Testis (tissue), 5 donors: ENCODE measurements at regions of chr2 and their contacts with region 1.

Region 1: DNA sequence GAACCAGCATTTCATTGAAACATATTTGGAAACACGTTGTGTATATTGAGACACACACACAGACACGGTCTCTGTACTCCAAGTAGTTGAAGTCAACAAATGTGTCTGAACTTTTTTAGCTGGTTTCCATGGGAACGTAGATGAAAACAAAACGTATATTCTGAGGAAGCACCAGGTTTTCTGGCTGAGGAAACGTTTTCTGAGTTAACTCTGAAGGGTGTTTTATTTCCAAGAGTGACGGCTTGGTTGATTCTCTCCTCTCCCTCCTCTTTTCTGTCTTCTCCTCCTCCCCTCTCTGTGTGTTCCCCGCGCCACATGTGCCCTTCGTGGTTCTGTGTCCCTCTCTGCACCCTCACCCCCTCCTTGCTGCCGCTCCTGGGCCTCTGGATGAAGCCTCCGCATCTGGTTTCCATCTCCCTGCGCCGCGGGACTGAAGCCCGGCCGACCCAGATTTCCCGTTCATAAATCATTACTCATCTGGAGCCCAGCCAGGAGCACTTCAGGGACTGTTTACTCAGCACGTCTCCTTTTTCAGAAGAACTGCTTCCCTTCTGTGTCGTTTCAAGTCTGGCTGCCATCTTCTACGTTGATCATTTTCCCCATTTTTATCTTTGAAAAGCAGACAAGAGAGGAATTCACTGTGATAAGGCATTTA is 122.7 kb downstream of the COL6A3 start:
- DNase-seq: peak; percentile 94
- H3K4me3 ChIP-seq: no peak overlapping the region
- H3K27ac ChIP-seq: peak overlapping the region; percentile 65 to 83
- H3K4me1 ChIP-seq: peaks cover 15% of the 10 kb centered on the region
- H3K27me3 ChIP-seq: no peaks in the 10 kb centered on the region
- CTCF ChIP-seq: no peak
- POLR2A ChIP-seq: no peak

Region 2: DNA sequence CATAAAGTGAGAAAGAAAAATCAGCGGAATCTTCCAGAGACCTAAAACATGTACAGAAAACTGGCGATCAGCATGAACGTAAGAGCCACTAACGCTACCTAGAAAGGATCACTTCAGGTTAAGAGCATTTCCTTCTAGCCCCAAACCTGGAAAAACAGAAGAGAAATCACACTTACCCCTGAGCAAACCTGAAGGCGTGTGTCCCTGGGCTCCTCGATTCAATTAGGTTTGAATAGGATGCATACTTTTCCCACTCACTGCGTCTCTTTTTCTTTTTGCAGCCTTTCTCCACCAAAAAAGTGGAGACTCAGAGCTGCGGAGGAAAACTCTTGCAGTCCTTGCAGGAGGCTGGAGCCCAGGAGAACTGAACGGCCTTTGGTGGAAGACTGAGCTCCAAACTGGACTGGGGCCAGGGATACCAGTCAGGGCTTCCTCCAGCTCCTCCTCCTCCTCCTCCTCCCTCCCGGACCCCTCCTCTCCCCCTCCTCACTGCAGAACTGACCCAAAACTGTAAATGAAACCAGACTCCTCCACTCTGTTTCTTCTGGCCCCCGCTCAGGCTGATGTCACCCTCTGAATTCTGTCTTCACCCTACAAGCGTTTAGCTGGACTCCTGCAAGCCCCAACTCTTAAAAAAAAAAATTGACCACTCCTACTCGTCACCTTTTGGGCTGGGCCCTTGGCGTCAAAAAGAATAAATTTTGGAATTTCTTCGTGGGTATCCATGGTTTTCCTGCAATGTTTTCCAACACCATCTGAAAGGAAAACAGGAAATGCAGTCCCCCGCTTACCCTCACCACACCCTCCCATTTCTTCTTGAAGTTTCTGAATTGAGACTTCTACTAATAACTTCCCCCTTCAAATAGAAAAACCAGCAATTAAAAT is 122.8 kb after region 1 on chr2 and contains the start of gene COL6A3:
- intact Hi-C with region 1: loop called (anchors 10 kb)
- DNase-seq: peak; percentile 78
- H3K4me3 ChIP-seq: peak within 1 kb of the TSS; percentile 52 to 54
- H3K27ac ChIP-seq: peak within 1 kb of the TSS; percentile 90 to 93
- H3K4me1 ChIP-seq: no peaks in the 10 kb centered on the region
- H3K27me3 ChIP-seq: no peaks in the 10 kb centered on the region
- CTCF ChIP-seq: no peak
- POLR2A ChIP-seq: no peak
- total RNA-seq, gene COL6A3: 35.1 to 74.1 TPM

Region 3: DNA sequence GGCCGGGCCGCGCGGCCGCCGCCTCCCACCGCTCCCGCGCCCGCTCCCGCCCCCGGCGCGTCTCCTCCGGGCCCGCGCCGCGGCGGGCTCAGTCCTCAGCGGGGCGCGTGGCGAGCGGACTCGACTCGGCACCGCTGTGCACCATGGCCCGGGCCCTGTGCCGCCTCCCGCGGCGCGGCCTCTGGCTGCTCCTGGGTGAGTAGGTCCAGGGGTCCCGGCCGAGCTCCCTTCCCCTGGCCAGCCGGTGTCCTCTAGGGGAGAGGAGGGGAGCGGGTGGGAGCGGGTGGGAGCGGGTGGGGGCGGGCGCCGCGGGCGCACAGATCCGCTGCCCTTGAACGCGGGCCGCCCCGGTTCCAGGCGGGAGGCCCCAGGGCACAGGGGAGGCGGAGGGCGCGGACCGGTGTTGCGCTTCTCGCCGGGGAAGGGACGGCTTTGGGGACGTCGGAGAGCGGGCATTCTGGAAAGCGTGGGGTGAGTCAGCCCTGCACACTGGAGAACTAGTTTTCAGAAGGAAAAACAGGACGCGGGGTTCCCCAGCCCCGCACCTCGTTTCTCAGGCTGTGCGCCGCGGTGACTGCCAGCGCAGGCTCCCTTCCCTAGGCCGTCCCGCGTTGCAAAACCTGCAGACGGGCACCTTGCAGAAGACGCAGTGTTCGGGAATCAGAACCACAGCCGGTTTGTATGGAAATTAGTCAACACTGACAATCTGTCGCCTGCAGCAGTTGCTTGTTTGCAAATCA is 568.4 kb after region 1 on chr2 and contains the start of gene RAMP1:
- intact Hi-C with region 1: no loop called
- DNase-seq: peak; percentile 29
- H3K4me3 ChIP-seq: peak within 1 kb of the TSS; percentile 42 to 60
- H3K27ac ChIP-seq: no peak within 1 kb of the TSS
- H3K4me1 ChIP-seq: peaks cover 11% of the 10 kb centered on the region
- H3K27me3 ChIP-seq: no peaks in the 10 kb centered on the region
- CTCF ChIP-seq: no peak
- POLR2A ChIP-seq: no peak
- total RNA-seq, gene RAMP1: 8.9 to 14.3 TPM